Activated naive CD4-positive, alpha-beta T cell treated with anti-CD3 and anti-CD28 coated beads for 36 hours (primary cell): ENCODE measurements at regions of chr3 and their contacts with region 1.

Region 1: GRCh38 chr3:122092460-122093165 is 37.5 kb downstream of the CD86 start:
- DNase-seq: peak; percentile 77
- H3K4me3 Mint-ChIP-seq: no peak overlapping the region
- H3K27ac Mint-ChIP-seq: no peak overlapping the region
- H3K4me1 Mint-ChIP-seq: peaks cover 10% of the 10 kb centered on the region
- H3K27me3 Mint-ChIP-seq: peaks cover 2% of the 10 kb centered on the region

Region 2: GRCh38 chr3:121749276-121750086 is 343.1 kb before region 1 on chr3 and contains the start of gene GOLGB1:
- CTCF ChIA-PET with region 1: no interaction called
- intact Hi-C with region 1: loop called (anchors 2 kb)
- DNase-seq: peak; percentile 97
- H3K4me3 Mint-ChIP-seq: no peak within 1 kb of the TSS
- H3K27ac Mint-ChIP-seq: no peak within 1 kb of the TSS
- H3K4me1 Mint-ChIP-seq: peaks cover 5% of the 10 kb centered on the region
- H3K27me3 Mint-ChIP-seq: no peaks in the 10 kb centered on the region
- total RNA-seq, gene GOLGB1: 18.2 to 19.7 TPM

Region 3: GRCh38 chr3:121855555-121855954 is 237.1 kb before region 1 on chr3:
- CTCF ChIA-PET with region 1: no interaction called
- intact Hi-C with region 1: loop called (anchors 1 kb)
- DNase-seq: peak; percentile 5
- H3K4me3 Mint-ChIP-seq: no peak overlapping the region
- H3K27ac Mint-ChIP-seq: no peak overlapping the region
- H3K4me1 Mint-ChIP-seq: no peaks in the 10 kb centered on the region
- H3K27me3 Mint-ChIP-seq: no peaks in the 10 kb centered on the region

Region 4: DNA sequence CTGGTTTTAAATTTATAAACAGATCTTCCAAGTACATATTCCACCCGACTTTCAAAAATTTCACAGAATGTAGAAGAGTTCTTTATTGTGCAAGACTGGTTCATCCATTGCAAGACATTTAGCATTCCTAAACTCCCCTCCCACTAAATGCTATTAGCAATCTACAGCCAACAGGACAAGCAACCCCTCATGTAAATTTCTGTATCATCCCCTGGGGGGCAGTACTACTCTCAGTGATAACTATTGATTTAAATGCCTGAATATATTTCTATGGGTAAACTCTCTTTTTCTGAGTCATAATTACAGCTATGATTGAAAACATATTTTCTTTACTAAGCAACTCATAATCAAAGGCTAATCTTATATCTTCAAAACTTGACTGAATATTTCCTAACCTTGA is 209.1 kb before region 1 on chr3:
- CTCF ChIA-PET with region 1: no interaction called
- intact Hi-C with region 1: loop called (anchors 1 kb)
- DNase-seq: no peak
- H3K4me3 Mint-ChIP-seq: no peak overlapping the region
- H3K27ac Mint-ChIP-seq: no peak overlapping the region
- H3K4me1 Mint-ChIP-seq: no peaks in the 10 kb centered on the region
- H3K27me3 Mint-ChIP-seq: no peaks in the 10 kb centered on the region